ENCODE measurements at regions of chr9 and their contacts with region 1.

Region 1: DNA sequence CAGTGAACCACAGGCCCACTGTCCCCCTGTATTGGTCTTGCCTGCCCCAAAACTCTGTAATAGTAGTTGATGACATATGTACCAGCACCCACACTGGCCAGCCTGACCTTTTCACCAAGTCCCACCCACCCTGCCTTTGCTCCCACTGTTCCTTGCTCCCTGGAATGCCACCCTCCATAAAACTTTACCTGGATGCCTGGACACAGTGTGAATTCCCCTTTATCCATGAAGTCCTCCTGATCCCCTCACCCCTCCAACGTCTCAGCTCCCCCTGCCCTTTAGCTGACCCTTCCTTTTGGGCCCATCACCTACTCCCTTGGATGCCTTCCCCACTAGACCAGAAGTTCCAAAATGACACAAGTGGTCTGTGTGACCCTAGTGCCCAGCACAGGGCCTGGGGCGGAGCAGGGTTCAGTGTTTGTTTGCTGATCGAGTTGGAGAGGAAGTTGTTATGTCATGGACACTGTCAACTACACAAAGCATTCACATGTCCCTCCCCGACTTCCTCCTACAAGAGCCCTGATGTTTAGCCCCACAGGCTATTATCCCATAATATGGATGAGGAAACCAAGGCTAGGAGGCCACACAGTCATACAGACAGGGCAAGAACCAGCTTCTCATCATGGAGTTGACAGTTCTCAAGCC is 16.1 kb downstream of the AMBP start:
- DNase-seq: no peak
- H3K4me3 ChIP-seq: no peak overlapping the region
- H3K27ac ChIP-seq: no peak overlapping the region
- H3K4me1 ChIP-seq: no peaks in the 10 kb centered on the region
- H3K27me3 ChIP-seq: no peaks in the 10 kb centered on the region
- CTCF ChIP-seq: no peak
- EP300 ChIP-seq: no peak
- POLR2A ChIP-seq: no peak
- RAD21 ChIP-seq: no peak

Region 2: GRCh38 chr9:114072184-114073140 is 10.5 kb after region 1 on chr9:
- CTCF ChIA-PET with region 1: interaction called, 10 read pairs
- POLR2A ChIA-PET with region 1: no interaction called
- DNase-seq: no peak
- H3K4me3 ChIP-seq: no peak overlapping the region
- H3K27ac ChIP-seq: no peak overlapping the region
- H3K4me1 ChIP-seq: no peaks in the 10 kb centered on the region
- H3K27me3 ChIP-seq: peaks cover 0 to under 1% (median 0%) of the 10 kb centered on the region in 4 experiments; a peak in 2 of 7 replicates
- CTCF ChIP-seq: peak; percentile 48 to 56 (median 55)
- EP300 ChIP-seq: no peak
- POLR2A ChIP-seq: no peak
- RAD21 ChIP-seq: peak; percentile 63 to 74